Sciatic nerve (tissue), 2 donors: ENCODE measurements at regions of chr19 and their contacts with region 1.

Region 1: DNA sequence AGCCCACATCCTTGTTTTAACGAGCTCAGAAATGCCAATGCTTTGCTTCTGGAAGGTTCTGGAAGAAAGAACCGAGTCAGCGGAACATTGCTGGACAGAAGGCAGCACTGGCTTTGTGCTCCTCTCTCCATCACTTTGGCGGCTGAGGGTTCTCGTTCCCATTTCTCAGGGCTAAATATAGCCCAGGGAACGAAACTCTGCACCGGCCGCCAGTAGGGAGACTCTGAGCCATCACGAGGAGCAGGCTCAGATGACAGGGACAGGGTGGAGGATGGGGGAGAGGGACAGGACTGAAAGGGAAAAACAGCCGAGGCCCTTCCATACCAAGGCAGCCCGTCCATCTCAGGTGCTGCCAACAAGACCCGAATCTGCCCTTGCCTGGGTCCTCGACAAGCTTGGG is 166.4 kb downstream of the CACNA1A start:
- DNase-seq: no peak
- ATAC-seq: no peak

Region 2: DNA sequence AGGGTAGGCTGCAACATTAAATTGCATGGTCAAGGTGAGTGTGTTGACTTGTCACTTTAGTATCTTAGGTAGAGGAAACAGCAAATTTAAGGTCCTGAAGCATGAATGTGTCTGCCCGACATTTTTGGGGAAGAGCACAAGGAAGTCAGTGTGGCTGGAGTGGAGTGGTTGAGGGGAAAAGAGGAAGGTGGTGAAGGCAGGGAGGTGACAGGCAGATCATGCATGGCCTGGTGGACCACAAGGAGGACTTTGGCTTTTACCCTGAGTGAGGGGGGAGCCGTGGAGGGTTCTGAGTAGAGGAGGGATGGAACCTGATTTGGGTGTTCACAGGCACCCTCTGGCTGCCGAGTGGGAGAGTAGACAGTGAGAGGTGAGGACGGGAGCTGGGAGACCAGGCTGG is 21.7 kb before region 1 on chr19:
- intact Hi-C with region 1: loop called (anchors 2 kb)
- DNase-seq: no peak
- ATAC-seq: no peak

Region 3: DNA sequence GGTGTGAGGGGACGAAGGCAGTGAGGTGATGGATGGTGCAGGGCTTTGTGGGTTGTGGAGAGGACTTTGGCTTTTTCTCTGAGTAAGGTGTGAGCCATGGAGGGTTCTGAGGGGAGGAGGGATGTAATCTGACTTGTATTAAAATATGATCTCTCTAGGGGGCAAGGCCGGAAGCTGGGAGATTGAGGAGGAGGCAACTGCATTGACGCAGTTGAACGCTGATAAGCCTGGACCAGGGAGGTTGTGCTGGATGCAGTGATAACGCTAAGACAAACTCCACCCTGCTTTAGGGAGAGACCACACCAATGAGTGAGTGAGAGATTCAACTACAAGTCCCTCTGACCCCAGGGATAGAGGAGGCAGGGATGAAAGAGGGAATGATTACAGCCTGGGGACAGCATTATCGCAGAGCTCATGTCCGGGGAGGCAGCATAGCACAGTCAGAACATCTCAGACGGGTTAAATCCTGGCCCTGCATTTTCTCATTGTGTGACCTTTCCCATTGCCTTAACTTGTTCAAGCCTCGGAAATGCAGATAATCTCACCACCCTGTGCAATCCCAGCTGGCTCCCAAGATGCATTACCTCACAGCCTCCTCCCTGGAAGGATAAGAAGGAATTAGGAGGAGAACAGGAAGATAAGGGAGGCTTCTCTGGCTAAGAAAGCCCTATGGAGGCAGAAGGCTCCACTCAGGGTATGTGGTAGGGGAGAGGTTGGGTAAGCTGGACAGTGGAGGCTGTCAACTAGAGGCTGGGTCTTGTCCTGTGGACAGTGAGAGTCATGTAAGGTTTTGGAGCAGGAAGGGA is 42.2 kb after region 1 on chr19:
- intact Hi-C with region 1: loop called (anchors 1 kb)
- DNase-seq: no peak
- ATAC-seq: no peak